Left ventricle myocardium superior (tissue), 1 donor: ENCODE measurements at regions of chr1 and their contacts with region 1.

Region 1: GRCh38 chr1:32773018-32773763 is 44.0 kb downstream of the YARS1 start:
- DNase-seq: peak; percentile 90
- ATAC-seq: peak; percentile 89

Region 2: GRCh38 chr1:32291708-32292492 is 481.3 kb before region 1 on chr1 and contains the start of gene HDAC1:
- intact Hi-C with region 1: no loop called
- DNase-seq: peak; percentile 99
- ATAC-seq: peak; percentile 99
- total RNA-seq, gene HDAC1: 46.1 TPM

Region 3: GRCh38 chr1:32521165-32521564 is 252.0 kb before region 1 on chr1:
- intact Hi-C with region 1: loop called (anchors 10 kb)
- DNase-seq: no peak
- ATAC-seq: no peak

Region 4: GRCh38 chr1:32592943-32593342 is 180.2 kb before region 1 on chr1:
- intact Hi-C with region 1: no loop called
- DNase-seq: no peak
- ATAC-seq: no peak

Region 5: DNA sequence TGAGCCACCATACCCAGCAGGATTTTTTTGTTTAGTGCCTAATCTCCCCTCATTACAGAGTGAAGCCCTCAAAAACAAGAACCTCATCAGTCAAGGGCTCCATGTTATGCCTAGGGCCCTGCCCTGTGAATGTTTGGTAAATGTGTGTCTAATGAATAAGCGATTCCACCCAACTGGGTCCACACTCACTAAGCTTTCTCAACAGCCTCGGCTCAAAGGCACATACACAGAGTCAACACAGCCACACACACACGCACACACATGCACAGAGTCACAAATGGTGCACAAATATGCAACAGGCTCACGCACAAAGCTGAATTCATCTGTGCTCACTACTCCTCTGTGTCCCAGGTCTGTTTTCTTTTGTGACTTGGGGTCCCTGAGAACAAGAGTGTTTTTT is 58.9 kb before region 1 on chr1:
- intact Hi-C with region 1: loop called (anchors 5 kb)
- DNase-seq: no peak
- ATAC-seq: no peak

Region 6: GRCh38 chr1:32900951-32901822 is 128.0 kb after region 1 on chr1 and contains the start of gene TMEM54:
- intact Hi-C with region 1: no loop called
- DNase-seq: peak; percentile 73
- ATAC-seq: peak; percentile 91
- total RNA-seq, gene TMEM54: 6.7 TPM